AG04450 (cell line): ENCODE measurements at regions of chr3 and their contacts with region 1.

Region 1: GRCh38 chr3:67605377-67605776 is 49.0 kb downstream of the SUCLG2 start:
- DNase-seq: peak; percentile 50
- H3K4me3 ChIP-seq: no peak overlapping the region
- H3K27ac ChIP-seq: no peak overlapping the region
- H3K27me3 ChIP-seq: no peaks in the 10 kb centered on the region
- CTCF ChIP-seq: peak; percentile 71

Region 2: GRCh38 chr3:67620869-67621268 is 15.5 kb after region 1 on chr3:
- CTCF ChIA-PET with region 1: interaction called, 4 read pairs
- POLR2A ChIA-PET with region 1: interaction called, 10 read pairs
- DNase-seq: no peak
- H3K4me3 ChIP-seq: no peak overlapping the region
- H3K27ac ChIP-seq: no peak overlapping the region
- H3K27me3 ChIP-seq: no peaks in the 10 kb centered on the region
- CTCF ChIP-seq: no peak